OCI-LY7 (cell line): ENCODE measurements at regions of chrX and their contacts with region 1.

Region 1: DNA sequence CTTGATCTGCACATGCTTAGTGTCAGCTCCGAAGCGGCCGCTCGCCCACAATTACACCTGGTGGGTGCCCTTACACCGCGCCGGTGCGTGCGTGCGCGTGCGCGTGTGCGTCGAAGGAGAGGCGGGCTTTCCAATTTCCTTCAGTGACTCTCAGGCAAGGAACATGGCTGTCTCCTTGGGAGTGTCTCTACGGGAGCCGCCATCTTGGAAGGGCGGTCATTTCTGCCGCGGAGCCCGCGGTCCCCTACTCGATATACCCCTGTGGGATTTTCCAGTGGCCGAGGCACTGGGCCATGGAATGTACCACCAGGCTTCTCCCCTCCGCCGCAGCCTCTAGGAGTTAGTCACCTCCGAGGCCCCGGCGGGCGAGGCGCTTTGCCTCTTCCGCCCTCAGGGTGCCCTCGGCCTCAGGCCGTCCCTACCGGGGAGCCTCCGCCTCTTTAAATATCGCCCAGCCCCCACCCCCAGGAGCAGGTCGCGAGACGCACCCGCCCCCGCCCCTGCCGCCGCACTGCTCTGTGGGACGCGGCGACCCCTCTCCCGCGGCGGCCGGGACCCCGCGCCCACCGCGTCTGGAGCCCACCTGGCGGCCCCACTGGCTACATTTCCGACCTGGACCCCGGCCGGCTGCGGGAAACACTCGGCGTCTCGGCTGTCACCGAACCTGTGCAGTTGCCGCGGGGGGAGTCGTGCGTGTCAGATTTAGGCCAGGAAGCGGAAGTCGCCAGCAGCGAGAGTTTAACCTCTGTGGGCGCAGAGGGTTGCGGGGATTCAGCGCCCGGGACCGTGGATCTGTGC is at the start of gene ZNF41:
- DNase-seq: peak; percentile 90
- H3K4me3 ChIP-seq: peak within 1 kb of the TSS; percentile 91
- H3K27ac ChIP-seq: peak within 1 kb of the TSS; percentile 79
- H3K4me1 ChIP-seq: peaks cover 29% of the 10 kb centered on the region
- CTCF ChIP-seq: no peak
- total RNA-seq, gene ZNF41: 8.4 and 10.7 TPM in 2 replicates

Region 2: GRCh38 chrX:47361538-47362511 is 120.9 kb before region 1 on chrX:
- CTCF ChIA-PET with region 1: no interaction called
- POLR2A ChIA-PET with region 1: no interaction called
- intact Hi-C with region 1: loop called (anchors 10 kb)
- DNase-seq: peak; percentile 93
- H3K4me3 ChIP-seq: peak overlapping the region; percentile 68
- H3K27ac ChIP-seq: peak overlapping the region; percentile 74
- H3K4me1 ChIP-seq: peaks cover 33% of the 10 kb centered on the region
- CTCF ChIP-seq: peak; percentile 47

Region 3: GRCh38 chrX:47507153-47507867 is 24.6 kb after region 1 on chrX:
- CTCF ChIA-PET with region 1: no interaction called
- POLR2A ChIA-PET with region 1: no interaction called
- intact Hi-C with region 1: no loop called
- DNase-seq: no peak
- H3K4me3 ChIP-seq: no peak overlapping the region
- H3K27ac ChIP-seq: no peak overlapping the region
- H3K4me1 ChIP-seq: peaks cover 1% of the 10 kb centered on the region
- CTCF ChIP-seq: no peak

Region 4: DNA sequence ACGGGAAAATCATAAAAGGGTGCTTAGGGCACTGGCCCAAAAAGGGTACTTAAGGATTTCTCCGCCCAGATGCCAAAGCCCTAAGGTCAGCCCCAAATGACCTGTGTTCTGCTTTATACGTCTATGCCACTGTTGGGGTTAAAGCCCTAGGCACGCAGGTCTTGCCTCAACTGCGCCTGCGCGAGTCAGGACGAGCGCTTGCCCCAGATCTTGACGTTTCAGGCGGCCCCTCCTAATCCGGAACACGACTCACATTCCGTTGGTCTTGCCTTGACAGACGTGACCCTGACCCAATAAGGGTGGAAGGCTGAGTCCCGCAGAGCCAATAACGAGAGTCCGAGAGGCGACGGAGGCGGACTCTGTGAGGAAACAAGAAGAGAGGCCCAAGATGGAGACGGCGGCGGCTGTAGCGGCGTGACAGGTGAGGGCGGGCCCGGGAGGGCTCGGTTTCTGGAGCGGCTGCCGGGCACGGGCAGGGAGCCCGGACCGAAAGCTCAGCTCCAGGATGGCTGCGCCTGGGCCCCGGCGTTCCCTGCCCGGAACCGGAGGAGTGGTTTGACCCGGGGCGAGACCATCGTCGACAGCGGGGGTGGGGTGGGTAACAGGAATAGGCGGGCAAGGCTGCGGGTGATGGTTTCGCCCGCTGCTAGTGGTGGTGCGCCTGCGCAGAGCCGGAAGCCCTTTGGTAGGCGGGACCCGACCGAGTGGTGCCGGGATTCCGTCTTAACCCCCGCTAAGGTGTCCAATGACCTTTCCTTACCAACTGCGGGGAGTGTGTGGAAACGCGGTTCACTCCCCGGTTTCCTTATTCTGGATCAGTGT is 78.3 kb after region 1 on chrX and contains the start of gene ARAF:
- CTCF ChIA-PET with region 1: no interaction called
- POLR2A ChIA-PET with region 1: no interaction called
- intact Hi-C with region 1: no loop called
- DNase-seq: peak; percentile 98
- H3K4me3 ChIP-seq: peak within 1 kb of the TSS; percentile 86
- H3K27ac ChIP-seq: peak within 1 kb of the TSS; percentile 70
- H3K4me1 ChIP-seq: peaks cover 31% of the 10 kb centered on the region
- CTCF ChIP-seq: no peak
- total RNA-seq, gene ARAF: 13.2 and 28.9 TPM in 2 replicates